ENCODE measurements at regions of chr4 and their contacts with region 1.

Region 1: DNA sequence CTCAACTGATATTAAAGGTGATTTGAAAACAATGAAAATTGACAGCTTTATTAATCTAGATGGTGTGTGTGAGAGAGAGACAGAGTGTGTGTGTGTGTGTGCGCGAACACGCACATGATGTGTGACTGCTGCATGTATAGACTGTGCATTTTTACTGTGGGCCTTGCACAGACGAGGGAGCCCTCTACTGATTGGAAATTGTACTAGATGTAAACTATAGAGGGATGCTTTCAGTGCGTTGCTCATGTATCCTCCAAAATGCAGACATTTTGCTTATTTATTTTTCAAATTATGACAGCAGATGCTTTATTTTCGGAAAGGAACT is 168.4 kb upstream of the GK2 start:
- DNase-seq: no peak
- H3K4me3 ChIP-seq: no peak overlapping the region
- H3K27ac ChIP-seq: peak overlapping the region in 1 of 2 donors; percentile 23
- H3K4me1 ChIP-seq: no peaks in the 10 kb centered on the region
- H3K27me3 ChIP-seq: no peaks in the 10 kb centered on the region
- CTCF ChIP-seq: peak in 3 of 4 experiments; percentile 40 to 49 (median 48)
- POLR2A ChIP-seq: no peak

Region 2: DNA sequence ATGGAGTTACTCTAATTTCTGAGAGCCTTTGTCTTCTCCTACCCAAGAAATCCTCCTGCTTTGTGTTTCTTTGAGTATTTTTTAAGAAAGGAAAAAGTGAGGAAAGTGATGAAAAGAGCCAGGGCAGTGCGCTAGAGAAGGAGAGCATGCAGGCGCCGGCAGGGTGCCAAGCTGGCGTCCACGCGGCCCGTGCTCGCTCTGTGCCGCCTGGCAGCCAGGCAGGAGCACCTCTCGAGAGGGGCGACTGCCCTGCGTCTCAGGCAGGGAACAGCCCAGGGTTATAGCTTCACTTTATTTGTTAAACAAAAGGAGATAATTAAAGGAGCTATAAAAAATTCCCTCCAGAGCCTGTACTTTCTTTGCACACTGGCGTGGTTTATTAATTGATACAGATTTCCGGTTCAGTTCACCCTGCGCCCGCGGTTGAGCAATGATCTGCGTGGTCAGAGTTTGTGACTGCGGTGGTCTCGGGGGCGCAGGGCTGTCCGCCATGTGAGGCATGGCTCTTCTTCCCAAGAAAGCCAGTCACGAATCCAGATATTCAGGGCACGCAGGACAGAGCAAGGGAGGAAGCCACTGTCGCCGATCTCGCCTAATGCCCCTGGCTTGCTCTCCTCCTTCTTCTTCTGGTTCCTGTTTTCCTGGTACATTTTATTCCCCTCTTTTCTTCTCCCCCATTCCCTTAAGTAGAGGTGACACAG is 526.4 kb before region 1 on chr4:
- intact Hi-C with region 1: loop called (anchors 5 kb)
- DNase-seq: peak; percentile 44
- H3K4me3 ChIP-seq: peak overlapping the region in 1 of 2 donors; percentile 17
- H3K27ac ChIP-seq: peak overlapping the region; percentile 44 to 62
- H3K4me1 ChIP-seq: peaks cover 18% of the 10 kb centered on the region
- H3K27me3 ChIP-seq: no peaks in the 10 kb centered on the region
- CTCF ChIP-seq: no peak
- POLR2A ChIP-seq: no peak

Region 3: GRCh38 chr4:79317711-79318110 is 258.7 kb before region 1 on chr4:
- intact Hi-C with region 1: no loop called
- DNase-seq: no peak
- H3K4me3 ChIP-seq: no peak overlapping the region
- H3K27ac ChIP-seq: no peak overlapping the region
- H3K4me1 ChIP-seq: no peaks in the 10 kb centered on the region
- H3K27me3 ChIP-seq: no peaks in the 10 kb centered on the region
- CTCF ChIP-seq: no peak
- POLR2A ChIP-seq: no peak

Region 4: GRCh38 chr4:79917246-79917645 is 340.9 kb after region 1 on chr4:
- intact Hi-C with region 1: no loop called
- DNase-seq: no peak
- H3K4me3 ChIP-seq: no peak overlapping the region
- H3K27ac ChIP-seq: peak overlapping the region in 1 of 2 donors; percentile 10
- H3K4me1 ChIP-seq: no peaks in the 10 kb centered on the region
- H3K27me3 ChIP-seq: no peaks in the 10 kb centered on the region
- CTCF ChIP-seq: peak in 1 of 4 experiments; percentile 21
- POLR2A ChIP-seq: no peak

Region 5: DNA sequence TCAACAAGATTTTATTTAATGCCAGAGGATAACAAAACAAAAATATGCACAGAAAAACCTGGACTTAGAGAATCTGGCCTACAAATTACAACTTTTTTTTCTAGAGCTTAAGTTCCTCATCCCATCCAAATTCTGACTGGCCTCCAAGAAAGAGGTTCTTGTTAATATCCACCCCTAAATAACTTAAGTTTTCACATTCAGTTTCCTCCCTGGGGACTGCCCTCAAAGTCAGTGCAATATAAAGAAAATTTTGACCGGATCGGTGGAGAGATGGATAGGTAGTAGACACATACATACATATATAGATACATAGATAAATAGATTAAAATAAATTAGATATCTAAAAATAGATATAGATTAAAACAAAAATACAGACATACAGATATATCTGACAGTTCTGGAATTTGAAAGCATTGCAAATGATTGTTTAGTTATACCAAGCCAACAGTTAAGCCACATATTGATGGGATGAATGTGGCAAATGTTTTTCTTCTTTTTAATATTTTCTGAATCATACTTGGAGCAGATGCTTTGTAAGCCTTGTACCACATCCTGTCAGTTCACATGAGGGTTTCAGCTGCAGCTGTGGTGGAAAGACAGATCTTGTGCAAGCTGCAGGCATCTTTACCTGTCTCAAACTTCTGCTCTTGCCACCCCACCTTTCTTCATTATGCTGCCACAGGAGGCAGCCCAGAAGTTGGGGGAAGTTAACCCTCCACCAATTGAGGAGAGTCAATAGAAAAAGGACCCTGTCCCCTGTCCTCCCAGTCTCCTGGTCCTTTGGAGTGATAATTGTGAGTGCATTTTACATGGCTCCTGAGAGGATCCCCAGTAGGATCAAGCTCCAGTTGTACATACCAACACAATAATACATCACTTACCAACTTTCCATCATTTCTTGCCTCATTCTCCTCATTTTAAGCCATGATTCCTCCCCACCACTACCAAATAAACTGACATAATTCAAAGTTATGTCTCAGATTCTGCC is 562.5 kb after region 1 on chr4:
- intact Hi-C with region 1: no loop called
- DNase-seq: no peak
- H3K4me3 ChIP-seq: no peak overlapping the region
- H3K27ac ChIP-seq: no peak overlapping the region
- H3K4me1 ChIP-seq: no peaks in the 10 kb centered on the region
- H3K27me3 ChIP-seq: no peaks in the 10 kb centered on the region
- CTCF ChIP-seq: no peak
- POLR2A ChIP-seq: no peak

Measured in prostate gland (tissue), 2 donors.